ENCODE measurements at regions of chr6 and their contacts with region 1.

Region 1: DNA sequence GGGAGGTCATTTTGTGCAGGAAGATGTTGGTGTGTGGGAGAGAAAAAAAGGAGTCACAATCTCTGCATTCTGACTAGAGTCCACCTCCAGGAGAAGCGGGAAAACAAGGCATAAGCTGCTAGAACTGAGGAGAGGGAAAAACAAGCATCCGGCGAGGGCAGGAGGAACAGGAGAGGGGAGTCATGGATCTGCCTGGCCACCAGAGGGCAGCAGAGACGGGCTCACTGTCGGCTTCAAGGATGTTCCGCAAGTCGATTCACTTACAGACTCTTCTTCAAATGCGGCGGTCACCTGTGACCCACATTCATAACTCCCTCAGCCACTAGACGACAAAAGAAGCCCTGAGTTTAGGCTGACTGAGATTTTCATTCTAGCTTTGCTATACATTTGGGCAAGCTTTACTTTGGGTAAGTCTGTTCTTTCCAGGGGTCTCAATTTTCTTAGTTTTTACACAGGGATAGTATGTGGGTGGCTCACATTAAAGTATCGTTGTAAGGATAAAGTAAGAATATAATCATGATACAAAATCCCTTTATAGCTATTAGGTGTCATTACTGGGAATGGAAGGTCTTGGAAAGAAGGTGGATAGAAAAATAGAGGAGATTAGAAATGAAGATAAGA is 6.6 kb upstream of the BTNL2 start:
- DNase-seq: peak; percentile 92

Region 2: DNA sequence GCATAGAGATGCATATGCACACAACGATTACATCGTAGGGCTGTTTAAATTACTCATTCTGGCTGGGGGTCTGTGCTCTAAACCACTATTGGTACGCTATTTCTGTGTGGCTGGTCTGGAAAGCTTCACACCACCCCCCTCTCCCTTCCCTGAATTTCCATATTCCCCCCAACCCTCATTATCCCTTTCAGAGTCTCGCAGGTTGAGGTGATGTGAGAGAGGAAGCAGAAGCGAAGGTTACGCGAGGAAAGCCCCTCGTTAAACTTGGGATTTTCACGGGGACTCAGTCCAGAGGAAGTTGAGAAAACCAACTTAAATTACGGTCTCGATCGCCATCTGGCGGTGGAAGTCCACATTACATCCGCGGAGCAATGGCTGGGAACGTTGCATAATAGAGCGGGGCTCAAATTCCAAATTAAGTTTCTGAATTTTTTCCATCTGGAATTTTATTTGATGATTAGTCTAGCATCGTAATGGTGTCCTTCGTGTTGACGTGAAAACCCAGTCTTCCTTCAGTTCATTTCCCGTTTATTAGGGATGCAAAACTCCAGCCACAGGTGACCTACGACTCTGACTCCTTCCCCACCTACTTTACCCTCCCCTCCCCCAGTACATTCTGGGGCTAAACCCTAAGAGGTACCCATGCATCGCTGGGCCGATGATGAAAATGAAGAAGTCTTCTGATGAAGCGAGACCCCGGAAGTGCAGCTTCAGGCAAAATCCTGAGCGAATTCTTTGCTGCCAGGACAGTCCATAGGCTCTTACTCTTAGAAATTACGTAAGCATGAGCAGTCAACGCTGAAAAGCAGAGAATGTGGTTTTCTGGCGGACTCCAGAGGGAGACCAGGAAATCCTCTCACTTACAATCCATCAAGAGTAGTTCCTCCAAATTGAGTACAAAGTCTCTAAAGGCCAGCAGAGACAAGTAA is 383.6 kb after region 1 on chr6:
- intact Hi-C with region 1: loop called (anchors 5 to 10 kb)
- DNase-seq: peak; percentile 93